ENCODE measurements at regions of chr1 and their contacts with region 1.

Region 1: DNA sequence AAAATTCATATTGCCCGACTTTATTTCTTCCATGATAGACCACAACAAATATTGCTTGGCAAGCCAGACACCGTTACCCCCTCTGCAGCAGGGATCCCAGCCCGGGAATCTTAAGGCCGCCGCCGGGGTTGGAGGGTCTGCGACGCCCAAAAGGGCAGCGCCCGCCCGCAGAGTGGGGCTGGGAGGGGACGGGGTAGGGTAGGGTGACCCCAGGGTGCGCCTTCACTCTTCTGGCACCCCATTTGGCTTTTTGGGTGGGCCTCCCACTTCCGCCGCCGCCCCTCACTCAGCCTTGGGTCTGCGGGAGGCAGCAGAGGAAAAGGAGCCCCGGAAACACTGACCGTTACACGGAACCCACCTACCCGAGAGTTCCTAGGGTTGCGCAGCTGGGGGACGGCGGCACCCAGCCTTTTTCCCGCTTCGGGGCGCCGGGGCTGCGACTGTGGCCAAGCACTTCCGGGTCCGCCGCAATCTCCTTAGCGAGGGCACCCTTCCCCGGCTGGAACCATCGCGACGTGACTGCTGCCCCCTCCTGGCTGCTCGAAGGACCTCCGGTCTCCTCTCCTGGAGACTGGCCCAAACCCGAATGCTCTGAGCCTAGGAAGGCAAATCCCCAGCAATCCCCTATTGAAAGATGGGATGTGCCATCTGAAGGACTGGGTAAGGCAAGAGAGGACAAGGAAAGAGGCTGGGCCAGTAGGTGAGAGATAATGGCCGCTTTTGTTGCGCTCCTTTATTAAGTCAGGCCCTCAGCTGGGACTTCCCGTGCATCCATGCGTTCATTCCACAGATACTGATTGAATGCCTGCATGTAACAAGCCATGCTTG is at the start of gene PIGC:
- DNase-seq: peak; percentile 93
- H3K4me3 Mint-ChIP-seq: peak within 1 kb of the TSS; percentile 85
- H3K27ac Mint-ChIP-seq: peak within 1 kb of the TSS; percentile 92
- H3K4me1 Mint-ChIP-seq: peaks cover 33% of the 10 kb centered on the region
- H3K27me3 Mint-ChIP-seq: no peaks in the 10 kb centered on the region
- CTCF ChIP-seq: peak; percentile 87
- total RNA-seq, gene PIGC: 20.2 and 23.1 TPM in 2 replicates

Region 2: DNA sequence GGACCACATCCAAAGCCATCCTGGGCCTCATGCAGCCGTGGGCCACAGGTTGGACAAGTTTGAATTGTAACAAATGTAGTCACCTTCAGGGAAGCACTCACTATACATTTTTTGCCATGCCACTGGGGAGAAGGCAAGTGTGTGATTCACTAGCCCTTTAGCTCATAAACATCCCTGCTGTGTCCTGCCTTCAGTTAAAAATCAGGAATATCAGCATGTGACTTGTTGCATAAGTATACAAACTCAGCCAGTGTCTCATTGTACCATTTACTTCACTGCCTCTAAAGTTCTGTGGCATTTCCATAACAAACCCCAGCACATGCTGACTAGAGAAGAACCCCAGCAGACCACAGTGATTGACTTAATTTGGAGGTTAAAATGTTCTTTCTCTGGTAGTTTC is 165.4 kb before region 1 on chr1:
- CTCF ChIA-PET with region 1: no interaction called
- POLR2A ChIA-PET with region 1: no interaction called
- intact Hi-C with region 1: no loop called
- DNase-seq: peak; percentile 54
- H3K4me3 Mint-ChIP-seq: no peak overlapping the region
- H3K27ac Mint-ChIP-seq: no peak overlapping the region
- H3K4me1 Mint-ChIP-seq: peaks cover 15% of the 10 kb centered on the region
- H3K27me3 Mint-ChIP-seq: no peaks in the 10 kb centered on the region
- CTCF ChIP-seq: no peak

Region 3: GRCh38 chr1:172429331-172430127 is 14.3 kb before region 1 on chr1:
- CTCF ChIA-PET with region 1: interaction called, 183 read pairs
- POLR2A ChIA-PET with region 1: interaction called, 4 read pairs
- intact Hi-C with region 1: no loop called
- DNase-seq: peak; percentile 83
- H3K4me3 Mint-ChIP-seq: no peak overlapping the region
- H3K27ac Mint-ChIP-seq: no peak overlapping the region
- H3K4me1 Mint-ChIP-seq: peaks cover 5% of the 10 kb centered on the region
- H3K27me3 Mint-ChIP-seq: no peaks in the 10 kb centered on the region
- CTCF ChIP-seq: peak; percentile 78

Region 4: DNA sequence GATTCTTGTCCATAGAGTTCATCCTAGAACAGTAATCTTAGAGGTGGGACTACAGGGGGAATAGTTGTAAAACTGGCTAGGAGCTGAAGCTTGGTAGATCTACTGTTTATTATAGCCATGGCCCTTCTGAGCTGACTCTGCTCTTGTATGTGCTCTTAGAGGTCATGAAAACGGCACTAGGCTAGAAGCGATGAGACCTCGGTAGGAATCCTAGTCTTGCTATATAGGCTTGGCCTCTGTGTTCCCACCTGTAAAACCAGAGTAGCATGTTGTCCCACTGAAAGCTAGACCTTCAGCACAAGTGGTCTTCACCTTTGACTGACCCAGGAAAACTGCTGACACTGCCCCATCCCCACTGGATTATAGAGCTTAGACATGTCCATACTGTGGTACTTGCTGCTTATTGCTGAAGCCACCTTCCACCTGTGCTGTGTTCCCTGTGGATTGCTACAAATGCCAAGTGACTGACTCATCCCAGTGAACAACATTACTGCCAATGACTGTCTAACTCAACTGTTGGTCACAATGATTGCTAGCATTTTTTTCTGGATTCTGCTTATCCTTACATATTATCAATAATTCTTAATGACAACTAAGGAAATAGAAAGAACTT is 23.1 kb after region 1 on chr1:
- CTCF ChIA-PET with region 1: interaction called, 12 read pairs
- POLR2A ChIA-PET with region 1: no interaction called
- intact Hi-C with region 1: no loop called
- DNase-seq: peak; percentile 61
- H3K4me3 Mint-ChIP-seq: no peak overlapping the region
- H3K27ac Mint-ChIP-seq: no peak overlapping the region
- H3K4me1 Mint-ChIP-seq: peaks cover 11% of the 10 kb centered on the region
- H3K27me3 Mint-ChIP-seq: no peaks in the 10 kb centered on the region
- CTCF ChIP-seq: no peak

Measured in MCF 10A (cell line).